H1 (cell line): ENCODE measurements at regions of chr1 and their contacts with region 1.

Region 1: DNA sequence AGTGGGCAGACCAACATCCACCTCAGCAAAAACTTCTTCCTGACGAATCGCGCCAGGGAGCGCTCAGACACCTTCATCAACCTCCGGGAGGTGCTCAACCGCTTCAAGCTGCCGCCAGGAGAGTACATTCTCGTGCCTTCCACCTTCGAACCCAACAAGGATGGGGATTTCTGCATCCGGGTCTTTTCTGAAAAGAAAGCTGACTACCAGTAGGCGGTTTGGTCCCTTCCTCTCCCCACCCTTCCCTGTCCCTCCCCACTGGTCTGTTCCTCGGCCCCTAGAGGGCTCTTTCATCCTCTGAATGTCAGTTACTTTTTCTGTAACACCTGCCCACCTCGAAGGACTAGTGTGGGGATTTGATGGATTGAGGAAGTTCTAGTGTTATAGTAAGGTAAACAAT is 46.9 kb downstream of the CAPN2 start:
- DNase-seq: peak; percentile 53 to 67
- H3K4me3 ChIP-seq: no peak overlapping the region
- H3K27ac ChIP-seq: no peak overlapping the region
- H3K4me1 ChIP-seq: no peaks in the 10 kb centered on the region
- H3K27me3 ChIP-seq: no peaks in the 10 kb centered on the region
- CTCF ChIP-seq: peak; percentile 18 to 28 (median 26); a peak in 3 of 4 replicates
- EP300 ChIP-seq: no peak
- POLR2A ChIP-seq: no peak
- RAD21 ChIP-seq: peak; percentile 44 to 57

Region 2: GRCh38 chr1:223771814-223772770 is 12.8 kb after region 1 on chr1:
- CTCF ChIA-PET with region 1: interaction called, 20 read pairs
- POLR2A ChIA-PET with region 1: interaction called, 4 read pairs
- DNase-seq: peak in 1 of 2 experiments; percentile 45
- H3K4me3 ChIP-seq: no peak overlapping the region
- H3K27ac ChIP-seq: no peak overlapping the region
- H3K4me1 ChIP-seq: peaks cover 0 to 5% (median 2%) of the 10 kb centered on the region in 4 experiments; a peak in 2 of 7 replicates
- H3K27me3 ChIP-seq: no peaks in the 10 kb centered on the region
- CTCF ChIP-seq: no peak
- EP300 ChIP-seq: no peak
- POLR2A ChIP-seq: no peak
- RAD21 ChIP-seq: no peak